PC-9 (cell line): ENCODE measurements at regions of chr3 and their contacts with region 1.

Region 1: GRCh38 chr3:181793006-181793405 is 81.3 kb downstream of the SOX2 start:
- DNase-seq: no peak
- H3K4me3 ChIP-seq: no peak overlapping the region
- H3K27ac ChIP-seq: no peak overlapping the region
- H3K4me1 ChIP-seq: no peaks in the 10 kb centered on the region
- H3K27me3 ChIP-seq: no peaks in the 10 kb centered on the region
- CTCF ChIP-seq: no peak

Region 2: GRCh38 chr3:181771120-181771519 is 21.9 kb before region 1 on chr3:
- CTCF ChIA-PET with region 1: no interaction called
- POLR2A ChIA-PET with region 1: no interaction called
- intact Hi-C with region 1: no loop called
- DNase-seq: no peak
- H3K4me3 ChIP-seq: no peak overlapping the region
- H3K27ac ChIP-seq: no peak overlapping the region
- H3K4me1 ChIP-seq: no peaks in the 10 kb centered on the region
- H3K27me3 ChIP-seq: no peaks in the 10 kb centered on the region
- CTCF ChIP-seq: no peak

Region 3: DNA sequence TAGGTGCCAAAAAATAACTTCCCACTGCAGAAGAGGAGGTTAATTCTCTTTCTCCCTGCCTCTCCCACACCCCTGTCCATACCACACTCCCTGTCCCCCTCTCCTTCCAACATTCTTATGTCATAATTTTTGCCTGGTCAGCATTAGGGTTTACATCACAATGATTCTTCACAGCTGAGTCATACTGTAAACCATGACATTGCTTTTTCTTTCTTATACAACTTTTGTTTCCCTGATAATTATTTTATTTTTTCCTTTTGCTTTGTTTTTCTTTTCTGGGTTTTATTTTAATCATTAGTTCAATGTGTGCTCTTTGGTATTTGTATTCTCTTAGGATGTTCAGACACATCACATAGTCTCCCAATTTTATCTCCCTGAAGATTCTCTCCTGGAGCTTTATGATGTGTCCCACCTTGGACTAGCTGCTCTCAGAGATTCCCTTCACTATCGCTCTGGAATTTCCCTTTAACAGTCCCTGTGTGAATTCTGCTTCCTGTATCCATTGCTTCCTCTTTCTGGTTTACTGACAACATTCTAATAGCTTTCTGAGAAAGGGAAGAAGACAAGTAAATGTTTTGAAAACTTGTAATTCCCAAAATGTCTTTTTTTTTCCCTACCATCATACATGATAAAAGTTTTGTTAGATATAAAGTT is 10.6 kb before region 1 on chr3:
- CTCF ChIA-PET with region 1: no interaction called
- POLR2A ChIA-PET with region 1: no interaction called
- intact Hi-C with region 1: loop called (anchors 2 kb)
- DNase-seq: no peak
- H3K4me3 ChIP-seq: no peak overlapping the region
- H3K27ac ChIP-seq: peak overlapping the region; percentile 75
- H3K4me1 ChIP-seq: peaks cover 13% of the 10 kb centered on the region
- H3K27me3 ChIP-seq: no peaks in the 10 kb centered on the region
- CTCF ChIP-seq: no peak